OCI-LY7 (cell line): ENCODE measurements at regions of chr12 and their contacts with region 1.

Region 1: GRCh38 chr12:111761099-111761498 is 5.6 kb upstream of the ALDH2 start:
- DNase-seq: peak; percentile 53
- H3K4me3 ChIP-seq: peak overlapping the region; percentile 16
- H3K27ac ChIP-seq: peak overlapping the region; percentile 88
- H3K4me1 ChIP-seq: peaks cover 88% of the 10 kb centered on the region
- CTCF ChIP-seq: no peak

Region 2: GRCh38 chr12:111730420-111730819 is 30.7 kb before region 1 on chr12:
- CTCF ChIA-PET with region 1: no interaction called
- POLR2A ChIA-PET with region 1: interaction called, 9 read pairs
- intact Hi-C with region 1: loop called (anchors 2 kb)
- DNase-seq: peak; percentile 89
- H3K4me3 ChIP-seq: peak overlapping the region; percentile 11
- H3K27ac ChIP-seq: peak overlapping the region; percentile 93
- H3K4me1 ChIP-seq: peaks cover 53% of the 10 kb centered on the region
- CTCF ChIP-seq: no peak